Mammary epithelial cell (primary cell): ENCODE measurements at regions of chr9 and their contacts with region 1.

Region 1: GRCh38 chr9:129584136-129584535 is 36.8 kb downstream of the C9orf50 start:
- DNase-seq: peak; percentile 64
- H3K4me3 ChIP-seq: no peak overlapping the region
- H3K27ac ChIP-seq: no peak overlapping the region
- H3K4me1 ChIP-seq: no peaks in the 10 kb centered on the region
- H3K27me3 ChIP-seq: peaks cover 2% of the 10 kb centered on the region
- CTCF ChIP-seq: no peak

Region 2: DNA sequence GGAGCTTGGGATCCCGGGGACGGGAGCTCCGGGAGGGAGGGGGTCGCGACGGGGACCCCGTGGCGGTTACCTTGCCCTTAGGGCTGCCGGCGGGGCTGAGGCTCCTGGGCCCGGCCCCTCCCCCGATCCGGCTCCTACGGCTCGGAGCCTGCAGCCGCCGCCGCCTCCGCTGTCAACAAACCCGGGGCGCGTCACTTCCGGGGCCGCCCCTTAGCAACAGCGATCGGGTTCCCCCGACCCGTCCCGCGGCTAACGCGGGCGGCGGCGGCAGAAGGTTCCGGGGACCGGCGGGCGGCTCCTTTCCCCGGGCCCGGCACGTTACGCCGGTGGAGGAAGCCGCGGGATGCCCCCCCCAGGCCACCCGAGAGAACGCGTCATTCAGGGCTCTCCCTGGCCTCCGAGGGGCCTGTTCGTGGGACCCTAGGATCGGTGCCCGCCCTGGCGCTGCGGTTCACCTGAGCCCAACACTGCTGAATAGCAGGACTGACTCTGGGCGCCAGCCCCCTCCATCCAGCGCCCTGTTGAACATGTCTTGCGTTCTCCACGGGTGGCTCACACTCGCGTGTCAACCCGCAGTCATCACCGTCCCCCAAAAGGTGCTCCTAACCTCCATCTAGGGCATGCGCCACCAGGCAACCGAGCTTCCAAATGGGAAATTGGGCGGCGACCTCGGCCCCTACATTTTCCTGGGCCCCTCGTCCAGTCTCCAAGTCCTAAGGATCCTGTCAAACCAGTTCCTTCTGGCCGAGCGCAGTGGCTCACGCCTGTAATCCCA is 812.2 kb before region 1 on chr9 and contains the start of gene ZER1:
- CTCF ChIA-PET with region 1: no interaction called
- dilution Hi-C with region 1: no loop called
- in situ Hi-C with region 1: no loop called
- intact Hi-C with region 1: no loop called
- DNase-seq: peak; percentile 86
- H3K4me3 ChIP-seq: peak within 1 kb of the TSS; percentile 56 to 81 (median 67)
- H3K27ac ChIP-seq: peak within 1 kb of the TSS; percentile 79
- H3K4me1 ChIP-seq: peaks cover 5% of the 10 kb centered on the region
- H3K27me3 ChIP-seq: no peaks in the 10 kb centered on the region
- CTCF ChIP-seq: no peak
- total RNA-seq, gene ZER1: 27.3 to 29.2 TPM

Region 3: DNA sequence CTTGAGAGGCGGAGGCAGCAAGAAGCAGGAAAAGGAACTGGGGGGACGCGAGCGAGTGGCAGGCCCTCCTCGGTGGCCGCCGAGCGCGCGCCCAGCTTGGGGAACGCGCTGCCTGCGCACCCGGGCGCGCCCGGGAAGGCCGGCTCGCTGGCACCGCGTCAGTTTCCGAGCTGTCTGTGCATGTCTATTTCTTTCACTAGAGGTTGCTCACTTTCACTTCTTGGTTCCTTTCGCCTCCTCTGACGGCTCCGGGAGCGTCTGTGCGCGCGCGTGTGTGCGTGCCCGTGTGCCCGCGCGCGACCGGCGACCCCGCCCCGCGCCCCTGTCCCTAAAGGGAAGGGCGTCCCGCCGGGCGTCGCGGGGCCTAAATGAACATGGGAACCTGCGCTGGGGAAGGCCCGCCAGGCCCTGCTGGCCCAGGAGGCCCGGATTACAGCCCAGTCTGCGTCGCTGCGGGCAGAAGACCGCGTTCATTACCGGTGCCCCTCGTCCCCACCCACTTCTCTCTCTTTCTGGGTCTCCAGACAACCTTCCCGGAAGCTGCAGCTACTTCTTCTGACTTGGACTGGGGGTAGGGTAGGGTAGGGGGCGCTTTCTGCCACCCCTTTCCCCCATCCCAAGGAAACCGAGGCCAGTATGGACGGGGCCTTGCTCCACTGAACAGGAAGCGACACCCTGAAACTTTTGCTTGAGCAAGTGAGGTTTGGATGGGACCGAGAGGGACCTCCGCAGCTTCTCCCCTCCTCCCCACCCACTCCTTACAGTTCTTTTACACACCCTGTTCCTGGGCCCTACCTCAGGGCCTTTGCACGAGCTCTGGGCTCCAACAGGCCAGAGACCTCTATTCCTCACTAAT is 200.3 kb before region 1 on chr9:
- CTCF ChIA-PET with region 1: no interaction called
- dilution Hi-C with region 1: loop called (anchors 5 kb)
- in situ Hi-C with region 1: no loop called
- intact Hi-C with region 1: no loop called
- DNase-seq: peak; percentile 73
- H3K4me3 ChIP-seq: peak overlapping the region; percentile 37 to 58 (median 45)
- H3K27ac ChIP-seq: no peak overlapping the region
- H3K4me1 ChIP-seq: peaks cover 16% of the 10 kb centered on the region
- H3K27me3 ChIP-seq: no peaks in the 10 kb centered on the region
- CTCF ChIP-seq: peak in 1 of 2 donors; percentile 31

Region 4: DNA sequence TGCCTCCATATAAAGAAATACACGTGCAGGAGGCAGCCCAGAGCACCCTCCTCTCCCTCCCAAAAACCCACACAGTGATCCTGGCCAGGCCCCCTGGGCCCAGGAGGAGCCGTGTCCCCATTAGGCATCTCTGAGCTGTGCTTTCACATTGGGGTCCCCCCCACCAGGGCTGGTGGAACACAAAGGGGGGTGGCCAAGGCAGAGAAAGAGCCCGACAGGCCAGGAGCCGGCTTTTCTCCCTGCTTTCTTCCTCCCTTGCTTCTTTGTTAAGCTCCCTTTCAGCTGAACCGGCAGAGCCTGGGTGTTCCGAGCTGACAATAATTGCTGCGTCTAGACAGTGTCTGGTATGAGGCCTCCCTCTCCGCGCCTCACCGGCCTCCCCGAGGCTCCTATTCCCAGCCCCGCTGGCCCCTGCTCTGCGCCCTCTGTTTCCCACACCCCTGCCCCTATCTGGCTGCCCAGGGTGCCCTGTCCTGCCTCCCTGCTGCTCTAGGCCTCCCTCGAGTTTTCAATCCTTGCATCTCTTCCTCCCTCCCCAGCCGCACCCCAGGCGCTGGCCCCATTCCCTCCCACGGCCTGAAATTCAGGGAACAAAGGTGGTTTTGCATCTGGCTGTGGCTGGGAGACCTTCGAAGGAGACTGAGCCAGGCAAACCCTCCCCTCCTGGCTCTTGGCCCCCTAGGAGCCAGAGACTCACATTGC is 83.8 kb before region 1 on chr9:
- CTCF ChIA-PET with region 1: no interaction called
- dilution Hi-C with region 1: no loop called
- in situ Hi-C with region 1: no loop called
- intact Hi-C with region 1: no loop called
- DNase-seq: no peak
- H3K4me3 ChIP-seq: no peak overlapping the region
- H3K27ac ChIP-seq: no peak overlapping the region
- H3K4me1 ChIP-seq: peaks cover 13% of the 10 kb centered on the region
- H3K27me3 ChIP-seq: no peaks in the 10 kb centered on the region
- CTCF ChIP-seq: no peak